Naive thymus-derived CD4-positive, alpha-beta T cell (primary cell): ENCODE measurements at regions of chr2 and their contacts with region 1.

Region 1: DNA sequence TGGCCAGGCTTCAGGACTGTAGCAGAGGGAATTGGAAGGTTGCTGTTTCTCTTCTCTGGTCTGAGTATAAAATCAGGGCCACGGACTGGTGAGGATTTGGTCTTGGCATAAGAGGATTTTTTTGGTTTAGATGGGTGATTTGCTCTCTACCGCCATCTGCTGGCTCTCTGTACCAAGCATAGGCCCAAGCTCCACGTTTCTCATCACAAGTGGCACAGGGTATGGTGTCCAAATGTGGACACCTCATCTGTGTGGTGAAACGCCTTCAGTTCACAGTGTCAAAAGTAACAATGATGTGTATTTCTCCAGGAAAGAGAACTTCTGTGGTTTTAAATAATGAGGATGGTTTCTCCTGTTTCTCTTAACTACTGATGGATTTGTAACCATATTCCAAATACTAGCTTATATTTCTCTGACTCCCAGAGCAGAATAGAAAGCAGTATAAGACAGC is 115.1 kb downstream of the EML6 start:
- DNase-seq: peak; percentile 25 to 61 (median 45)
- ATAC-seq: peak; percentile 87
- H3K4me3 ChIP-seq: no peak overlapping the region
- H3K4me3 Mint-ChIP-seq: no peak overlapping the region
- H3K27ac ChIP-seq: no peak overlapping the region
- H3K27ac Mint-ChIP-seq: no peak overlapping the region
- H3K4me1 ChIP-seq: no peaks in the 10 kb centered on the region
- H3K4me1 Mint-ChIP-seq: no peaks in the 10 kb centered on the region
- H3K27me3 ChIP-seq: no peaks in the 10 kb centered on the region
- H3K27me3 Mint-ChIP-seq: peaks cover 0 to 2% (median 0%) of the 10 kb centered on the region in 5 donors

Region 2: GRCh38 chr2:54665436-54665856 is 173.2 kb before region 1 on chr2:
- CTCF ChIA-PET with region 1: interaction called, 6 read pairs
- POLR2A ChIA-PET with region 1: no interaction called
- intact Hi-C with region 1: loop called (anchors 1 to 5 kb)
- DNase-seq: peak in 7 of 9 donors; percentile 15 to 61 (median 50)
- ATAC-seq: peak; percentile 82
- H3K4me3 ChIP-seq: no peak overlapping the region
- H3K4me3 Mint-ChIP-seq: no peak overlapping the region
- H3K27ac ChIP-seq: no peak overlapping the region
- H3K27ac Mint-ChIP-seq: peak overlapping the region in 8 of 9 donors; percentile 42 to 96 (median 86)
- H3K4me1 ChIP-seq: no peaks in the 10 kb centered on the region
- H3K4me1 Mint-ChIP-seq: peaks cover 0 to 20% (median 5%) of the 10 kb centered on the region in 7 donors
- H3K27me3 ChIP-seq: no peaks in the 10 kb centered on the region
- H3K27me3 Mint-ChIP-seq: no peaks in the 10 kb centered on the region

Region 3: DNA sequence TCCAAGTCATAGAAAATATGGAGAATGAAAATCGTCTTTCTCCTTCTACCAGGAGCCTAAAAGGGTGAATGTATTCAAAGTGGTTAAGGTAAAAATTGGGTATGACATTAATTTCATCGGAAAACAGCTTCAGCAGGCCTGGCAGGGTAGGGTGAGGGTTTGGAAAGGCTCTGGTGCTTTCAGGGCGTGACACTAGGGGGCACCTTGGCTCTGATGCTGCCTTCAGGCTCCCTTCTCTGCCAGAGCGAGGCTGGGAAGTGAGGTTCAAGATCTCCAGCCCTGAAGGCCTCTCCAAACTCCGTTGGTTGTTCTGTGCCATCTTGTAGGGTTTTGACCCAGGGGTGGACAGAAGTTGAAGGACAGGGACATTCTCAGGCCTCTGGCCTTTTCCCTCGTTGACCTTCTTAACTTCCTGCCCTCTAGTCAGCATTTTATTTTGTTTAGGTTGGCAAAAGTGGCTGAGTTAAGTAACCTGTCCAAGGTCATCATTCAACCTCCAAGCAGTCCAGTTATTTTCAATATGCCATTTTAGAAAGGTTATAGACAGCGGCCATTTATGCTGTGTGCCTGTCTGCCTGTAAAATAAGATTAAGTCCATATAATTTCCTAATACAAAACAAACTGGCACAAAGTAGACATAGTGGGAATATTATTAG is 74.8 kb before region 1 on chr2:
- CTCF ChIA-PET with region 1: no interaction called
- POLR2A ChIA-PET with region 1: no interaction called
- intact Hi-C with region 1: loop called in 1 of 2 experiments (anchors 5 kb)
- DNase-seq: no peak
- ATAC-seq: no peak
- H3K4me3 ChIP-seq: no peak overlapping the region
- H3K4me3 Mint-ChIP-seq: no peak overlapping the region
- H3K27ac ChIP-seq: no peak overlapping the region
- H3K27ac Mint-ChIP-seq: no peak overlapping the region
- H3K4me1 ChIP-seq: no peaks in the 10 kb centered on the region
- H3K4me1 Mint-ChIP-seq: peaks cover 0 to 7% (median 0%) of the 10 kb centered on the region in 7 donors
- H3K27me3 ChIP-seq: no peaks in the 10 kb centered on the region
- H3K27me3 Mint-ChIP-seq: peaks cover 0 to 6% (median 3%) of the 10 kb centered on the region in 5 donors

Region 4: DNA sequence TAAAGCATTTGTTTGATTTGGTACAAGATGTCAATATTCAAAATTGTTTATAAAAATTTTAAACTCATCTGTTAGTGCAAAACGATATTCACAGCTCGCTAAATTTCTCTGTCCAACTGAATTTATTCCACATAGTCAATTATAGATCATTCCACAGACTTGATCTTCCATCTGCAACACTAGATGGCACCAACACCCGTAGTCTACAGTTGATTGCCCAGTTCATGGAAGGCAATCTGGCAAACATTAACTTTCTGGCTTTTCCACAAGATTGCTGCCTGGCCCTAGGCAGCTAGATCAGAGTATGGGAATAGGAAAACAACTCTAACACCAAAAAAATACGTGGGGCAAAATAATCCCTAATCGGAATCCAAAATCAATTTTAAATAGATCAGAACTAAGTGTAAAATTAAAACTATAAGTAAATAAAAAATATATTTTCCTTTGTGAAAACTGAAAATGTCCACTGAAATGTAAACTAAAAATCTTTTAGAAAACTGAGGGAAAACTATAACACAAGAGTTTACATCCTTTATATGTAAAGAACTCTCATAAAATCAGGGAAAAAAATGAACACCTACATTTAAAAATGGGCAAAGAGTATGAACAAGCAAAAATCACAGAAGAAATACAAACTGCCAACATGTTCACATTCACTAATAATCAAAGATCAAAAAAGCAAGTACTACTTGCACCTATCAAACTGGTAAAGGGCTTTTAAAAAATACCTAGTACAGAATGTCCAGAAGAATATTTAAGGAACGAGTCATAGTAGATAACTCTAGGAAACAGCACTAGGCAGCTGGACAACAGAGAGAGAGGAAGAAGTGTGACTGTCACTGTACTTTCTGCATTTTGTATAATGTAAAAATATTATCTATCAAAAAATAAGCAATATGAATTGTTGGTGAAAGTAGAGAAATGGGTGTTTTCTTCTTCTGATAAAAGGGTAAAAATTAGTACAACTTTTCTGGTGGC is 176.6 kb after region 1 on chr2:
- CTCF ChIA-PET with region 1: interaction called, 3 read pairs
- POLR2A ChIA-PET with region 1: no interaction called
- intact Hi-C with region 1: loop called in 1 of 2 experiments (anchors 2 kb)
- DNase-seq: peak in 7 of 9 donors; percentile 13 to 56 (median 41)
- ATAC-seq: peak; percentile 60
- H3K4me3 ChIP-seq: no peak overlapping the region
- H3K4me3 Mint-ChIP-seq: no peak overlapping the region
- H3K27ac ChIP-seq: no peak overlapping the region
- H3K27ac Mint-ChIP-seq: peak overlapping the region in 3 of 9 donors; percentile 0 to 47 (median 14)
- H3K4me1 ChIP-seq: peaks cover 9 to 10% of the 10 kb centered on the region in 2 donors
- H3K4me1 Mint-ChIP-seq: peaks cover 19 to 66% (median 41%) of the 10 kb centered on the region in 7 donors
- H3K27me3 ChIP-seq: no peaks in the 10 kb centered on the region
- H3K27me3 Mint-ChIP-seq: no peaks in the 10 kb centered on the region